ENCODE measurements at regions of chr15 and their contacts with region 1.

Region 1: DNA sequence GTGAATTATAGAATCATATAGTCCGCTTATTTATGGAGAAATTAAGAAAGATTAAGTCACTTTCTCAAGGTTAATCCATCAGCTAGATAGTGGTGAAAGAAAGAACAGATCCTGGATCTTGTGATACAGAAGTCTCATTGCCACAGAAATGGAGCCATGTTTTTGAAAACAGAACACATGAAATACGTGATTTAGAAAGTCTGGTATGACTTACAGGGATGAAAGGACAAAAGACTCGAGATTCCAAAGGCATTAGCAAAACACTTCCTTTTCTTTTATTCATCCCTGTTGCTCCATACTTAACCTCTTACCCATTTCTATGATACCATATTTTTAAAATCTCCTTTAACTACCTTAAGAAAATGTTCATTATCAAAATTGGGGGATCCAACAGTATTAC is 40.0 kb upstream of the TEX9 start:
- DNase-seq: peak; percentile 33
- ATAC-seq: no peak
- H3K4me3 ChIP-seq: no peak overlapping the region
- H3K27ac ChIP-seq: no peak overlapping the region
- H3K4me1 ChIP-seq: no peaks in the 10 kb centered on the region
- H3K27me3 ChIP-seq: no peaks in the 10 kb centered on the region
- CTCF ChIP-seq: no peak
- POLR2A ChIP-seq: no peak
- RAD21 ChIP-seq: no peak

Region 2: GRCh38 chr15:55998186-55998877 is 326.9 kb before region 1 on chr15:
- CTCF ChIA-PET with region 1: no interaction called
- POLR2A ChIA-PET with region 1: no interaction called
- dilution Hi-C with region 1: no loop called
- in situ Hi-C with region 1: no loop called
- intact Hi-C with region 1: no loop called
- DNase-seq: no peak
- ATAC-seq: no peak
- H3K4me3 ChIP-seq: no peak overlapping the region
- H3K27ac ChIP-seq: no peak overlapping the region
- H3K4me1 ChIP-seq: no peaks in the 10 kb centered on the region; the same call in 1 of the 2 replicates
- H3K27me3 ChIP-seq: no peaks in the 10 kb centered on the region
- CTCF ChIP-seq: no peak
- POLR2A ChIP-seq: no peak
- RAD21 ChIP-seq: no peak

Region 3: GRCh38 chr15:56168394-56168793 is 156.8 kb before region 1 on chr15:
- CTCF ChIA-PET with region 1: no interaction called
- POLR2A ChIA-PET with region 1: no interaction called
- dilution Hi-C with region 1: no loop called
- in situ Hi-C with region 1: no loop called
- intact Hi-C with region 1: no loop called
- DNase-seq: peak; percentile 35
- ATAC-seq: no peak; the same call in 1 of the 2 replicates
- H3K4me3 ChIP-seq: no peak overlapping the region
- H3K27ac ChIP-seq: no peak overlapping the region
- H3K4me1 ChIP-seq: 0 out of 2 replicates have a peak, but pooled peaks cover 2% of the 10 kb centered on the region
- H3K27me3 ChIP-seq: no peaks in the 10 kb centered on the region
- CTCF ChIP-seq: no peak
- POLR2A ChIP-seq: no peak
- RAD21 ChIP-seq: no peak

Region 4: DNA sequence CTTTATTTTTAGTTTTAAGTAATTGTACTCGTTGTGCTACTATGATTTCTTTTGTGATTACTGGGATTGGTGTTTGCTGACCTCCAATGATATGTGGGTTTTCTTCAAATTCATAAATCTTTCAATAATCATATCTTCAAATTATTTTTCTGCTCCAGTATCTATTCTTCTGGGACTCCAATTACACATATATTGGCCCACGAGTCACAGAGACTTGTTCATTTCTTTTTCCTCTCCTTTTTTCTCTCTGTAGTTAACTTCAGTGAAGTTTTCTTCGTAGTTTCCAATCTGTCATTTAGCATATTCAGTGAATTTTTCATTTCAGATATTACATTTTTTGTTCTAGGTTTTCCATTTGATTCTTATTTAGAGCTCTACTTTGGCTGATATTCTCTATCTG is 102.9 kb before region 1 on chr15:
- CTCF ChIA-PET with region 1: no interaction called
- POLR2A ChIA-PET with region 1: no interaction called
- dilution Hi-C with region 1: no loop called
- in situ Hi-C with region 1: no loop called
- intact Hi-C with region 1: no loop called
- DNase-seq: no peak
- ATAC-seq: no peak
- H3K4me3 ChIP-seq: no peak overlapping the region
- H3K27ac ChIP-seq: no peak overlapping the region
- H3K4me1 ChIP-seq: no peaks in the 10 kb centered on the region
- H3K27me3 ChIP-seq: no peaks in the 10 kb centered on the region
- CTCF ChIP-seq: no peak
- POLR2A ChIP-seq: no peak
- RAD21 ChIP-seq: no peak

Region 5: DNA sequence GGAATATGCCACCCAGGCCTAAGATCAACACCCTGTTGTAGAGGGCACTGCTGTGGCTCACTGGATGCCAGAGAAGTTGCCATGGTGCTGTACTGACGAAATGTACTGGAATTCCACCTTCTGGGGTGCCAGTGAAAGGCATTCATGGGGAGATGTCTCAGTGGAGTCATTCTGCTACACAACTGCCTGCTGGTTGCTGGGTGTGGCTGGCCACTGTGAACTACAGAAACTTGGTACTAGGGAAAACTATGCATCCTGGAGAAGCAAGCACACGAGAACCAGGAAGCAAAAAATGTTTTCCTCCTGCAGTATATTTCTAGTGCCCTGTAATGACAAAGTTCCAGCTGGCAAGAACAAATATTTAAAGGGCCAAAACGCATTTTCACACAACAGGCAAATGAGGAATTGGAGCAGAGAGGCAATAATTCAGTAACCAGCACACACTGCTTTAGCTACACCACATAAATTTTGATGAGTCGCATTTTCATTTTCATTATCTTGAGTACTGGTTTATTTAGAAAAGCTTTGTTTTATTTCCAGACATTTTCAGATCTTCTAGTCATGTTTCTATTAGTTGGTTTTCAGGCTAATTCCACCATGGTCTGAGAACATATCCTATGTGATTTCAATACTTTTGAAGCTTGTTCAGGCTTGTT is 63.2 kb before region 1 on chr15:
- CTCF ChIA-PET with region 1: no interaction called
- POLR2A ChIA-PET with region 1: interaction called, 13 read pairs
- dilution Hi-C with region 1: no loop called
- in situ Hi-C with region 1: no loop called
- intact Hi-C with region 1: no loop called
- DNase-seq: no peak
- ATAC-seq: no peak
- H3K4me3 ChIP-seq: no peak overlapping the region
- H3K27ac ChIP-seq: no peak overlapping the region
- H3K4me1 ChIP-seq: no peaks in the 10 kb centered on the region
- H3K27me3 ChIP-seq: no peaks in the 10 kb centered on the region
- CTCF ChIP-seq: no peak
- POLR2A ChIP-seq: no peak
- RAD21 ChIP-seq: no peak

Region 6: DNA sequence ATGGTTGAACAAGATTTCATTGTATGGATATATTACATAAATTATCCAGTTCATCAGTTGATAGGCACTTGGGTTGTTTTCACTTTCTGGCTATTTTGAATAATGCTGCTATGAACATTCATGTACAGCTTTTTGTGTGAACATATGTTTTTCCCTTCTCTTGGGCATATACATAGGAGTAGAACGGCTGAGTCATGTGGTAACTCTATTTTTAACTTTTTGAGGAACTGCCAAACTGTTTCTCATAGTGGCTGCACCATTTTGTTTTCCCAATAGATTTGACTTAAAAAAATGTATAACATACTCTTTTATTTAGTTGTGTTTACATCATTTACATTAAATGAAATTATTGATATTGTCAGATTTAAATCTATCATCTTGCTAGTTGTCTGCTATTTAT is 52.7 kb before region 1 on chr15:
- CTCF ChIA-PET with region 1: no interaction called
- POLR2A ChIA-PET with region 1: no interaction called
- dilution Hi-C with region 1: no loop called
- in situ Hi-C with region 1: no loop called
- intact Hi-C with region 1: no loop called
- DNase-seq: no peak
- ATAC-seq: no peak
- H3K4me3 ChIP-seq: no peak overlapping the region
- H3K27ac ChIP-seq: no peak overlapping the region
- H3K4me1 ChIP-seq: no peaks in the 10 kb centered on the region
- H3K27me3 ChIP-seq: no peaks in the 10 kb centered on the region
- CTCF ChIP-seq: no peak
- POLR2A ChIP-seq: no peak
- RAD21 ChIP-seq: no peak

Region 7: DNA sequence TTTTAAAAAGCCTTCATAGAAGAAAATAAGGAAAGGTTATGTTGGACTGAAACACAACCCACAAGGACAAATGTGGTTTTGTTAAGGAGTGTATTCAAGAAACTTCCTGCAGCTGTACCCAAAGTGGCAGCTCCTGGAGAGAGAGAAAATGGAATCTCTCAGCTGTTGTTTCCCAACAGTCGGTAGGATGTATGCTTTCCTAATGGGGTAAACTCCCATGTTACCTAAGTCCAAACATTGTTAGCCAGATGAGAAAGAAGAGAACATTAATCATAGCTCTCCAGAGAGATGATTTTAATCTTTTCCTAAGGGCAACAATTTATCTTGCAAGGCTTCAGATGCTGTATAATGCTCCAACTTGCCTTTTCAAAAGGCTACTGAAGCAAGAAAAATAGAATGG is 17.5 kb after region 1 on chr15:
- CTCF ChIA-PET with region 1: no interaction called
- POLR2A ChIA-PET with region 1: no interaction called
- dilution Hi-C with region 1: no loop called
- in situ Hi-C with region 1: no loop called
- intact Hi-C with region 1: loop called (anchors 1 kb)
- DNase-seq: no peak
- ATAC-seq: no peak
- H3K4me3 ChIP-seq: no peak overlapping the region
- H3K27ac ChIP-seq: no peak overlapping the region
- H3K4me1 ChIP-seq: no peaks in the 10 kb centered on the region
- H3K27me3 ChIP-seq: no peaks in the 10 kb centered on the region
- CTCF ChIP-seq: no peak
- POLR2A ChIP-seq: no peak
- RAD21 ChIP-seq: no peak

Region 8: GRCh38 chr15:56356616-56357015 is 31.4 kb after region 1 on chr15:
- CTCF ChIA-PET with region 1: no interaction called
- POLR2A ChIA-PET with region 1: interaction called, 12 read pairs
- dilution Hi-C with region 1: no loop called
- in situ Hi-C with region 1: no loop called
- intact Hi-C with region 1: no loop called
- DNase-seq: no peak
- ATAC-seq: no peak
- H3K4me3 ChIP-seq: no peak overlapping the region
- H3K27ac ChIP-seq: no peak overlapping the region
- H3K4me1 ChIP-seq: no peaks in the 10 kb centered on the region
- H3K27me3 ChIP-seq: no peaks in the 10 kb centered on the region
- CTCF ChIP-seq: no peak
- POLR2A ChIP-seq: no peak
- RAD21 ChIP-seq: no peak